ENCODE measurements at regions of chrX and their contacts with region 1.

Region 1: DNA sequence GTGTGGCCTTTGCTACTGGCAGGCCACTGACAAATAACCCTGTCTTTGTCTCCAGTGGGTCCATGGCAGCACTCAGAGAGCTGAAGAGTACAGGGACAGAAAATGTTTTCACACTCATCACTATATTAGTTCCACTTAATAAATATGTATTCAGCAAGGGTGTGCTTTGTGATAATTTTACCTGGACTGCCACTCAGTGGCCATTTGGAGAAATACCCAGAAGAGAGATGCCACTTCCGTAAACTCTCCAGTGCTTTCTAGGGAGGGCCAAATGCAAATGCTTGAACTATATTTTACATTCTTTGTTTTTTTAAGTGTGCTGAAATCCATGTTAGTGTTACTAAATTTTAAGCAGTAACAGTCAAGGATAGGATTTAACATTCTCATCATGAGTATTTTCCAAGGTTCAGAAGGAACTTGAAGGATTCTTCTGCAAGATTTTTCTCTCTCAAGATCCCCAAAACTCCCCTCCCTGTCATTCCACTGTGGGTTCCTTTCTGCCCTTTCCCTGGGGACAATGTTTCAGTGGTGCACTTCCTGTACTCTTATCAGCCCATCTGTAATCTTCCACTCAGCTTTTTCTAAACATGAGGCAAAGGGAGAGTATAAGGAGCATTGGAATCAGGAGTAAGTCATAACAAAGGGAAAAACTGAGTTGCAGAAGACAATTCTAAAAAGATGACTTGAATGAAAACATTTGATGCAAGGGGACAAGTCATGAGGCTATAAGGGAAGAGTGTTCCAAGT is 46.0 kb downstream of the TFDP3 start:
- DNase-seq: no peak
- H3K4me3 ChIP-seq: no peak overlapping the region
- H3K27ac ChIP-seq: no peak overlapping the region
- H3K4me1 ChIP-seq: no peaks in the 10 kb centered on the region
- H3K27me3 ChIP-seq: no peaks in the 10 kb centered on the region
- CTCF ChIP-seq: peak in 2 of 3 experiments; percentile 32 to 50; a peak in 2 of 4 replicates
- EP300 ChIP-seq: no peak
- POLR2A ChIP-seq: no peak
- RAD21 ChIP-seq: peak; percentile 74 to 78

Region 2: DNA sequence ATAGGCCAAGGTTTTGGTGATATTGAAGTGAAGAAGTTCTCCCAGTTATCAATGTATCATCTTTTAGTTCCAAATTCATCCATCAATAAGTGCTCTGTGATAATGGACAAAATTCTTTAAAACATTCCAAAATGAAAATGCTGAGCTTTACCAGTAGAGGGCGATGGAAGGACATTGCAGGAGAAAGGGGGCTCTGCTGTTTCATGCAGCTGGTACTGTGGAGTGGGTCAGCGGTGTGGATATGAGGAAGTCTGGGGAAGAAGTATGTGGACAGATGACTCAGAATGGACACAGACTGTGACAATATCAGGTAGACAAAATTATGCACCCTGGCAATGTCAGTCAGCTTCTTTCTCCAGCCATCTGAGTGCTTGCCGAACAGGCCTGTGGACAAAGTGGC is 167.1 kb before region 1 on chrX:
- CTCF ChIA-PET with region 1: interaction called, 25 read pairs
- POLR2A ChIA-PET with region 1: no interaction called
- DNase-seq: no peak
- H3K4me3 ChIP-seq: no peak overlapping the region
- H3K27ac ChIP-seq: no peak overlapping the region
- H3K4me1 ChIP-seq: no peaks in the 10 kb centered on the region
- H3K27me3 ChIP-seq: no peaks in the 10 kb centered on the region
- CTCF ChIP-seq: peak; percentile 18 to 63 (median 47)
- EP300 ChIP-seq: no peak
- POLR2A ChIP-seq: no peak
- RAD21 ChIP-seq: peak; percentile 69 to 77

Region 3: DNA sequence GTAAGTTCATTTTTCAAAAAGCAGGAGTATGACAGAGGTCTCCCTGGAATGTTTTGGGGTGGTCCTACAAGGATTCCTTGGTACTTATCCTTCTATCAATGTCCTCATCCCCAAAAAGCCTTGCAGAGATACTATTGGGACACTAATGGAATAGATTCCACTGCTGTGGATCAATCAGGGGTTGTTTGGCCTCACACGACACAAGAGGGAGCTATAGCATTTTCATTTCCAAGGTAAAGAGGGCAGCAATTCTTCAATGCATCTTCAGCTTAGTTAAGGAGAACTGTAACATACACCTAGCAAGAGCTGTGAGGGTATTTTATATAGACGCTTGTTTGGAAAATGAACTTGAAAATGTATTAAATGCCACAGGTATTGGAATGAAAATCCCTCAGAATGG is 126.1 kb before region 1 on chrX:
- CTCF ChIA-PET with region 1: interaction called, 20 read pairs
- POLR2A ChIA-PET with region 1: no interaction called
- DNase-seq: no peak
- H3K4me3 ChIP-seq: no peak overlapping the region
- H3K27ac ChIP-seq: no peak overlapping the region
- H3K4me1 ChIP-seq: no peaks in the 10 kb centered on the region
- H3K27me3 ChIP-seq: no peaks in the 10 kb centered on the region
- CTCF ChIP-seq: peak in 2 of 3 experiments; percentile 19 to 42; a peak in 2 of 4 replicates
- EP300 ChIP-seq: no peak
- POLR2A ChIP-seq: no peak
- RAD21 ChIP-seq: peak; percentile 68 to 75

Measured in H1 (cell line).